ENCODE measurements at regions of chr3 and their contacts with region 1.

Region 1: DNA sequence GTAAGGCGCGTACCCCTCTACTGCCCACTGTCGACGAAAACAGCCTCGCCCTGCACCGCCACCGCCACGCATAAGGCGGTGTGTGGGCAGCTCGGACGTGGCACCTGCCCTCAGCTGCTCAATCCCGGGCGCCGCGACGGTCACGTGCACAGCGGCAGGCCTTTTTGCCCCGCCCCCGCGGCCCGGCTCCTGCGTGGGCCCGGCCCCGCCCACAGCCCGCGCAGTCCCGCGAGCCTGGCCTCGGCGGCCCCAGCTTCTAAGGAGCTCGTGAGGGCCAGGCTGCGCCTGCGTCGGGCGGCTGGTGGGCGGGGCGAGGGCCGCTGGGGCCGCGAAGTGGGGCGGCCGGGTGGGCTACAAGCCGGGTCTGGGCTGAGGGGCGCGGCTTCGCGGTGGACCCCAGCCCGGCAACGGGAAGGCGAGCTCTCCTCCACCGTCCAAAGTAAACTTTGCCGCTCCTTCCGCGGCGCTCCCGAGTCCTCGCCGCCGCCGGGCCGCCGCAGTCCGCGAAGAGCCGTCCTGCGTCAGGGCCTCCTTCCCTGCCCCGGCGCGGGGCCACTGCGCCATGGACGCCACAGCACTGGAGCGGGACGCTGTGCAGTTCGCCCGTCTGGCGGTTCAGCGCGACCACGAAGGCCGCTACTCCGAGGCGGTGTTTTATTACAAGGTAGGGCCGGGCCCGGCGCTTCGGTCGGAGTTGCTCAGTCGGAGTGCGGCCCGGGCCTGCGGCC is at the start of gene CAPN7:
- DNase-seq: peak; percentile 97 to 98 (median 98)
- ATAC-seq: peak; percentile 95
- H3K4me3 ChIP-seq: peak within 1 kb of the TSS; percentile 90
- H3K27ac ChIP-seq: peak within 1 kb of the TSS; percentile 89
- H3K4me1 ChIP-seq: peaks cover 14% of the 10 kb centered on the region in 2 experiments; a peak in 3 of 5 replicates
- H3K27me3 ChIP-seq: no peaks in the 10 kb centered on the region
- CTCF ChIP-seq: peak; percentile 41 to 52 (median 45); a peak in 5 of 6 replicates
- EP300 ChIP-seq: no peak
- POLR2A ChIP-seq: peak; percentile 84
- RAD21 ChIP-seq: peak in 1 of 2 experiments; percentile 31; a peak in 1 of 4 replicates
- polyA plus RNA-seq, gene CAPN7: 6.5 to 10.0 TPM

Region 2: GRCh38 chr3:15113463-15113862 is 92.6 kb before region 1 on chr3:
- CTCF ChIA-PET with region 1: no interaction called
- POLR2A ChIA-PET with region 1: interaction called, 3 read pairs
- in situ Hi-C with region 1: loop called (anchors 5 kb)
- intact Hi-C with region 1: loop called (anchors 5 kb)
- DNase-seq: no peak
- ATAC-seq: no peak
- H3K4me3 ChIP-seq: no peak overlapping the region
- H3K27ac ChIP-seq: no peak overlapping the region
- H3K4me1 ChIP-seq: peaks cover 1 to 2% of the 10 kb centered on the region in 2 experiments; a peak in 3 of 5 replicates
- H3K27me3 ChIP-seq: peaks cover 0 to 4% of the 10 kb centered on the region in 2 experiments; a peak in 2 of 5 replicates
- CTCF ChIP-seq: no peak
- EP300 ChIP-seq: no peak
- POLR2A ChIP-seq: no peak
- RAD21 ChIP-seq: no peak

Region 3: GRCh38 chr3:15268033-15268631 is 62.0 kb after region 1 on chr3:
- CTCF ChIA-PET with region 1: interaction called, 3 read pairs
- POLR2A ChIA-PET with region 1: interaction called, 3 read pairs
- in situ Hi-C with region 1: no loop called
- intact Hi-C with region 1: loop called (anchors 1 kb)
- DNase-seq: peak; percentile 82 to 94 (median 84)
- ATAC-seq: peak; percentile 81
- H3K4me3 ChIP-seq: no peak overlapping the region
- H3K27ac ChIP-seq: peak overlapping the region; percentile 82; the same call in 1 of the 3 replicates
- H3K4me1 ChIP-seq: peaks cover 29 to 32% of the 10 kb centered on the region in 2 experiments
- H3K27me3 ChIP-seq: no peaks in the 10 kb centered on the region
- CTCF ChIP-seq: peak; percentile 97 to 99 (median 99)
- EP300 ChIP-seq: no peak; the same call in 1 of the 2 replicates
- POLR2A ChIP-seq: no peak
- RAD21 ChIP-seq: peak; percentile 100

Region 4: DNA sequence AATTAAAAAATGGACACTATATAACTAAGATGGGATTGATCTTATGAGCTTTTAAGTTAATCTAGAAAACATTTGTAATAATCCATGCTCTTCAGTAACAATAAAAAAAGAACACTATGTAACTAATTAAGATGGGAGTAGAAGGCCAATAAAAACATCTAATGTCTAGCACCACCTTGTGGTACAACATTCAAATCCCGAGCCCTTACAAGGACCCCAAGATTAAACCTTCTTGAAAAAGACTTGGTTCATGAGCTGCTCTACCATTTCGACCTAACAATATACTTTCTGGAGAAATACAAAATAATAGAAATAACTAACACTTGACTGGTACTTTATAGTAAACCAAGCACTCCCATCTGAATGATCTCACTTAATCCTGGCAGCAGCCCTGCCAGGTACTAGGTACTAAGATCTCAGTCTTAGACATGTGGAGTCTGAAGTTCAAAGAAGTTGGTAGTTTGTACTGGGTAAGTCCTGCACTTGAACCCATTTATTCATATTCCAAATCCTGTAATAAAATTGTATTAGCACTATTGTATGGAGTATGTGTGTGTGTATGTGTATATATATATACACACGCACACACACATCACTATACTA is 199.5 kb after region 1 on chr3:
- CTCF ChIA-PET with region 1: interaction called, 18 read pairs
- POLR2A ChIA-PET with region 1: interaction called, 3 read pairs
- in situ Hi-C with region 1: no loop called
- intact Hi-C with region 1: loop called (anchors 1 kb)
- DNase-seq: peak; percentile 62 to 76 (median 63)
- ATAC-seq: peak; percentile 89
- H3K4me3 ChIP-seq: no peak overlapping the region
- H3K27ac ChIP-seq: no peak overlapping the region
- H3K4me1 ChIP-seq: no peaks in the 10 kb centered on the region
- H3K27me3 ChIP-seq: no peaks in the 10 kb centered on the region
- CTCF ChIP-seq: peak; percentile 62 to 88 (median 72)
- EP300 ChIP-seq: no peak
- POLR2A ChIP-seq: no peak
- RAD21 ChIP-seq: peak; percentile 77 to 92

Region 5: DNA sequence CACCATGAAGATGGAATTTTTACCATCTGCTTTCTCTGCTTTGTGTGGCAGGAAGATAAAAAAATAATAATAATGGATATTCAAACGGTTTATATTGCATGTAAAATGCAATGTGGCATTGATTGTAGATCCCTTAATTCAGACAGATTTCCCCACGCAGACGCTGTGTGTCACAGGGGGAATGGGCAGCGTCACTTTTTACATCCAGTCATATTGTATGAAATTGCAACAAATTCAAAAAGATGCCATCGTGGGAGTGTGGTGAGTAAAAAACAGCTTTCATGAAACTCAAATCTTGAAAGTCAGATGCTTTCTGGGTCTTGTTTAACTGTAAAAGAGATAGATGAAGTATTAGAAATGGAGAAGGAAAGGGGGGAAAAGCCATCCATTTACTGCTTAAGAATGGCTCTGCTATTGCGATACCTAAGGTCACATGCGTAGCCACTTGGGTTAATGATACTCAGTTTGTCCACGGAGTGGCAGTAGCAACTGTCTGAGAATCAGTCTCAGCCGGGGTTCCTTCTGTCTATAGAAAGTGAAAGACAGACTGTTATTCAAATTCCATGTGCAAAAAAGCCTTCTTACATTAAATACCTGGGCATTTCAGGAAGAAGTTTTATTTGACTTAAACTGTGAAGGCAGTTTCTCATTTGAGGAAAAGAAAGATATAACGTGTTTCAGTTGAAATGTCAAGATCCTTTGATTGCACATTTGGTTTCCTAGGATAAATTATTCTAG is 423.9 kb after region 1 on chr3:
- CTCF ChIA-PET with region 1: no interaction called
- POLR2A ChIA-PET with region 1: no interaction called
- in situ Hi-C with region 1: no loop called
- intact Hi-C with region 1: loop called (anchors 10 kb)
- DNase-seq: peak; percentile 72 to 86 (median 76)
- ATAC-seq: peak; percentile 99
- H3K4me3 ChIP-seq: no peak overlapping the region
- H3K27ac ChIP-seq: no peak overlapping the region
- H3K4me1 ChIP-seq: peaks cover 3 to 12% of the 10 kb centered on the region in 2 experiments; a peak in 3 of 5 replicates
- H3K27me3 ChIP-seq: no peaks in the 10 kb centered on the region
- CTCF ChIP-seq: peak; percentile 77 to 93 (median 85)
- EP300 ChIP-seq: no peak; the same call in 1 of the 2 replicates
- POLR2A ChIP-seq: no peak
- RAD21 ChIP-seq: peak; percentile 92 to 93

Region 6: DNA sequence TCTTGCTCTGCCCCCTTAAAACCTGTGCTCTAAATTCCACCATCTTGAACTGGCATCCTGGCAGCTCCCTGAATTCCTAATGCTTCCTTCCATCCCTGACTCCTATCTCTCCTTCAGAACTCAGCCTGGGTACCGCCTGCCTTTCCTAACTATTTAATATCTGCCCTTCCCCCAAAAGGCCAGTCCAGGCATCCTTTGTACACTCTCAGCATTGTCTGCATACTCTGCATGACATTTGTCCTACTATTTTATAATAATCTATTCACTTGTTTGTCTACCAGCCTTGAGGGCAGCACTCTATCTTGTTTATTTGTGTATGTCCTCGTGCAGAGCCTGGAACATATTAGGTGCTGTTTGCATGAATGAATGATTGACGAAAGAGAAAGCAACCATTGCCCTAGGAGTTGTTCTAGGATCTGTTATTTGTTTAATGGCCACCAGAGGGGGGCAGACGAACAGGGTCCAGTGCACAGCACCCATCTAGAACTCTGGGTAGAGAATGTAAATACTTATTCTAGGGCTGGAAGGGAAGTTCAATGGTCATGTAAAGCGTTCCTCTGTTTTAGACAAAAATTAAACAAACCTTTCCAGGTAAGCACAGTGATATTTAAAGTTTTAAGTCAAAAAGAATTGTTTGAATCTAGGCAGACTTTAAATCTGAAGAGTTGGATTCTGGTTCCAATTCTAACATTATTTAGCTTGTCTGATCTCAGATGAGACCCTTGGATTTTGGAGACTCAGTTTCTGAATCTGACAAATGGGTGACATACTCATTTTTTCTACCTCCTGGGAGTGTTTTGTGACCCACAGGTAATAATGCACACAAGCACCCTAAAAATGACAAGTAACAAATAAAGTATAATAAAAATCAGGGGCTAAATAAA is 842.6 kb after region 1 on chr3:
- CTCF ChIA-PET with region 1: no interaction called
- POLR2A ChIA-PET with region 1: no interaction called
- in situ Hi-C with region 1: no loop called
- intact Hi-C with region 1: loop called (anchors 10 kb)
- DNase-seq: peak; percentile 70 to 75 (median 74)
- ATAC-seq: peak; percentile 99
- H3K4me3 ChIP-seq: no peak overlapping the region
- H3K27ac ChIP-seq: no peak overlapping the region
- H3K4me1 ChIP-seq: no peaks in the 10 kb centered on the region
- H3K27me3 ChIP-seq: peaks cover 0 to 11% of the 10 kb centered on the region in 2 experiments; a peak in 2 of 5 replicates
- CTCF ChIP-seq: peak; percentile 82 to 89 (median 84)
- EP300 ChIP-seq: no peak
- POLR2A ChIP-seq: no peak
- RAD21 ChIP-seq: peak; percentile 94 to 95

Region 7: DNA sequence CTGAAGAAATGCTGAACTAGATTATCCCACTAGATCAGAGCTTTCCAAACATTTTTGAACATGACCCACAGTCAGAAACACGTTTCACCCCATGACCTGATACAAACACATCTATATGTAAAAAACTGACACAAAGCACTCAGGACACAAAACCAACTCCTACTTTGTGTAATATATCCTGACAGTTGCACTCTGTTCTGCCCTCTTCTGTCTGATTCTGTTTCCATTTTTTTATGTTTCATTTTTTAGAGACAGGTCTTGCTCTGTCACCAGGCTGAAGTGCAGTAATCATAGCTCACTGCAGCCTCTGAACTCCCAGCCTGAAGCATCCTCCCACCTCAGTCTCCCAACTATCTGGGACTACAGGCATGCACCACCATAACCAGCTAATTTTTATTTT is 1323.2 kb after region 1 on chr3:
- CTCF ChIA-PET with region 1: no interaction called
- POLR2A ChIA-PET with region 1: no interaction called
- in situ Hi-C with region 1: loop called (anchors 25 kb)
- intact Hi-C with region 1: no loop called
- DNase-seq: no peak
- ATAC-seq: peak; percentile 24; the same call in 1 of the 3 replicates
- H3K4me3 ChIP-seq: no peak overlapping the region
- H3K27ac ChIP-seq: no peak overlapping the region
- H3K4me1 ChIP-seq: no peaks in the 10 kb centered on the region
- H3K27me3 ChIP-seq: peaks cover 27 to 45% of the 10 kb centered on the region in 2 experiments; a peak in 4 of 5 replicates
- CTCF ChIP-seq: no peak
- EP300 ChIP-seq: no peak
- POLR2A ChIP-seq: no peak
- RAD21 ChIP-seq: no peak; a peak in 1 of 4 replicates

Measured in K562 (cell line).